ENCODE measurements at regions of chr4 and their contacts with region 1.

Region 1: DNA sequence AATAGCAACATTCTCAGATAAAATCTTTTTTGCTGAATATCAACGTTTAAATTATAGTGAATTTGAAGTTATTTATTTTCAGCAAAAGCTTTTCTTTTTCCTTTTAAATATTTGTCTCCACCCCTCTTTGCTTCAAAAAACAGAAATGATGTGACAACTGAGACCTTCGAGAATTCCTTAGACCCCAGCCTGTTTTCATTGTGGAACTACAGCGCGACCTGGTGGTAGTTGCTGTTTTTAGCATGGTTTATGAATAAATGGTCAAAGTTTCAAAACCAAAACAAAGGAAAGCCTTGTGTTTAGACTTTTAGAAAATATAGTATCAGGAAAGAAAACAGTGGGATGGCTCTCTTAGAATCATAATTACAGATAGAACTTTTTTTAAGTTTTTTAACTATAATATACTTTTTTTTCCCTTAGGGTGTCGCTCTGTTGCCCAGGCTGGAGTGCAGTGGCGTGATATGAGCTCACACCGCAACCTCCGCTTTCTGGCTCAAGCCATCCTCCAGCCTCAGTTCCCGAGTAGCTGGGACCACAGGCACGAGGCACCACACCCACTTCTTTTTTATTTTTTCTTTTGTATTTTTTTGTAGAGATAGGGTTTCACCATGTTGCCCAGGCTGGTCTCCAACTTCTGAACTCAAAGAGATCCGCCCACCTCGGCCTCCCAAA is 26.8 kb upstream of the TMEM184C start:
- DNase-seq: peak; percentile 40 to 65
- H3K4me3 ChIP-seq: no peak overlapping the region
- H3K4me3 Mint-ChIP-seq: no peak overlapping the region
- H3K27ac Mint-ChIP-seq: no peak overlapping the region
- H3K4me1 ChIP-seq: no peaks in the 10 kb centered on the region
- H3K4me1 Mint-ChIP-seq: no peaks in the 10 kb centered on the region
- H3K27me3 ChIP-seq: no peaks in the 10 kb centered on the region
- H3K27me3 Mint-ChIP-seq: no peaks in the 10 kb centered on the region
- CTCF ChIP-seq: peak; percentile 72 to 74

Region 2: GRCh38 chr4:147019061-147019460 is 571.3 kb before region 1 on chr4:
- CTCF ChIA-PET with region 1: interaction called, 3 read pairs
- POLR2A ChIA-PET with region 1: no interaction called
- intact Hi-C with region 1: loop called (anchors 1 kb)
- DNase-seq: peak; percentile 70 to 74
- H3K4me3 ChIP-seq: no peak overlapping the region
- H3K4me3 Mint-ChIP-seq: no peak overlapping the region
- H3K27ac Mint-ChIP-seq: no peak overlapping the region
- H3K4me1 ChIP-seq: no peaks in the 10 kb centered on the region
- H3K4me1 Mint-ChIP-seq: no peaks in the 10 kb centered on the region
- H3K27me3 ChIP-seq: no peaks in the 10 kb centered on the region
- H3K27me3 Mint-ChIP-seq: peaks cover 21% of the 10 kb centered on the region
- CTCF ChIP-seq: peak; percentile 76 to 77

Region 3: DNA sequence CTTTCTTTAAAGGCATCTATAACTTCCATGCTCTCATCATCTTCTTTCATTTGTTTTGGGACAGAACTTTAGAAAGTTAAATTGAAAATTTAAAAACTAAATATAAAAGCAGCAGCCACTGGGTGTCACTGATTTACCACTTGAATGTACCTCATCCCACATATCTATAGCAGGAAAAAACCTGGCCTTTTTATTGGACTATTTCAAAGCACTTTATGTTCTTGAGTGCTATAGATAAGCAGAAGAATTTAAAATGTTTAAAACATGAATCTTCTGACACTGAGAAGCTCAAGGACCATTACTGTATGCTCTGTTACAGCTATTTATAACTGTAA is 479.4 kb before region 1 on chr4:
- CTCF ChIA-PET with region 1: no interaction called
- POLR2A ChIA-PET with region 1: no interaction called
- intact Hi-C with region 1: loop called (anchors 1 kb)
- DNase-seq: no peak
- H3K4me3 ChIP-seq: no peak overlapping the region
- H3K4me3 Mint-ChIP-seq: no peak overlapping the region
- H3K27ac Mint-ChIP-seq: no peak overlapping the region
- H3K4me1 ChIP-seq: no peaks in the 10 kb centered on the region
- H3K4me1 Mint-ChIP-seq: no peaks in the 10 kb centered on the region
- H3K27me3 ChIP-seq: no peaks in the 10 kb centered on the region
- H3K27me3 Mint-ChIP-seq: peaks cover 3% of the 10 kb centered on the region
- CTCF ChIP-seq: no peak

Region 4: DNA sequence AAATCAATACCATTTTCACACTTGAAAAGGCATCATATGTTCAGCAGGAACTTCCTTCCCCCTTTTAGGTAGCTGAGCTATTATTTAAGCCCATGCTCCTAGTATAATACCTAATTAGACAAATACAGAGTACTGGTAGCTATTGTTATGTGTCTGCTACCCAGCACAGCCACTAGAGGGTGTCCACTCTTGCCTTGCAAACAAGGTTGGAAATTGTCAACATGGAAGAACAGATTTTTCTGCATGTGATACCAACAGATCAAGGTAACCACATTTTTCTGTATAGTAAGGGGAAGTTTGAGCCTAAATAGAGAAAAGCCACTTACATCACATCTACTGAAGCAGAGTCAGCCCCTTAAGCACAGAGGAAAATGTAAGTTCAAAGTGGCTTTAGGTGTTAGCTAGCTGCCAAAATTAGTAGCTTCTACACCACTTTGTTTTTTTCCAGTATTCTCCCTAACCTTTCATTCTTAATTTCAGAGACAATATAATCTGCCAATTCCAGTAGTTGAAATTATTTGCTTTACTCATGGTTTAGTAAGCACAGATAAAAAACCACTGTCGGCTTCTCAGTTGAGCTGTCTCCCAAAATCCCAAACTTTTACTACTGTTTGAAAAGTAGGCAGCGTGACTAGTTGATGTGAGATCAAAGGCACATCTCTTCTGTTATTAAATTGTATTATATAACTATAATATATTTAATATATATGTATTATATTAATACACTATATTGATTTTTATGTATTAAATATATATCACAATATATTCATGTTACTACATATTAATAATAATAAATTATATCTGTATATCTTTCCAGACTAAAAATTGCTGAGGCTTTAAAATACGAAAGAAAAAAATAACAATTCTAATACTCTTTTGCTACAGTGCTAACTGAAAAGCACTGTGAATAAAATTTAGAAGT is 71.3 kb before region 1 on chr4:
- CTCF ChIA-PET with region 1: interaction called, 21 read pairs
- POLR2A ChIA-PET with region 1: no interaction called
- intact Hi-C with region 1: loop called (anchors 1 kb)
- DNase-seq: peak; percentile 64 to 65
- H3K4me3 ChIP-seq: no peak overlapping the region
- H3K4me3 Mint-ChIP-seq: no peak overlapping the region
- H3K27ac Mint-ChIP-seq: no peak overlapping the region
- H3K4me1 ChIP-seq: no peaks in the 10 kb centered on the region
- H3K4me1 Mint-ChIP-seq: no peaks in the 10 kb centered on the region
- H3K27me3 ChIP-seq: no peaks in the 10 kb centered on the region
- H3K27me3 Mint-ChIP-seq: no peaks in the 10 kb centered on the region
- CTCF ChIP-seq: peak; percentile 86 to 87

Measured in Caco-2 (cell line).